Esophagus muscularis mucosa (tissue), 4 donors: ENCODE measurements at regions of chr7 and their contacts with region 1.

Region 1: GRCh38 chr7:94436018-94436604 is 41.4 kb downstream of the COL1A2 start:
- DNase-seq: no peak
- H3K4me3 ChIP-seq: no peak overlapping the region
- H3K27ac ChIP-seq: no peak overlapping the region
- H3K4me1 ChIP-seq: peaks cover 0 to 8% (median 3%) of the 10 kb centered on the region in 4 donors
- H3K27me3 ChIP-seq: no peaks in the 10 kb centered on the region
- CTCF ChIP-seq: peak; percentile 73 to 83 (median 73)
- EP300 ChIP-seq: no peak
- POLR2A ChIP-seq: no peak

Region 2: GRCh38 chr7:94289071-94289470 is 147.0 kb before region 1 on chr7:
- intact Hi-C with region 1: loop called (anchors 1 kb)
- DNase-seq: no peak
- H3K4me3 ChIP-seq: no peak overlapping the region
- H3K27ac ChIP-seq: no peak overlapping the region
- H3K4me1 ChIP-seq: no peaks in the 10 kb centered on the region
- H3K27me3 ChIP-seq: no peaks in the 10 kb centered on the region
- CTCF ChIP-seq: peak; percentile 94 to 96 (median 94)
- EP300 ChIP-seq: no peak
- POLR2A ChIP-seq: no peak

Region 3: DNA sequence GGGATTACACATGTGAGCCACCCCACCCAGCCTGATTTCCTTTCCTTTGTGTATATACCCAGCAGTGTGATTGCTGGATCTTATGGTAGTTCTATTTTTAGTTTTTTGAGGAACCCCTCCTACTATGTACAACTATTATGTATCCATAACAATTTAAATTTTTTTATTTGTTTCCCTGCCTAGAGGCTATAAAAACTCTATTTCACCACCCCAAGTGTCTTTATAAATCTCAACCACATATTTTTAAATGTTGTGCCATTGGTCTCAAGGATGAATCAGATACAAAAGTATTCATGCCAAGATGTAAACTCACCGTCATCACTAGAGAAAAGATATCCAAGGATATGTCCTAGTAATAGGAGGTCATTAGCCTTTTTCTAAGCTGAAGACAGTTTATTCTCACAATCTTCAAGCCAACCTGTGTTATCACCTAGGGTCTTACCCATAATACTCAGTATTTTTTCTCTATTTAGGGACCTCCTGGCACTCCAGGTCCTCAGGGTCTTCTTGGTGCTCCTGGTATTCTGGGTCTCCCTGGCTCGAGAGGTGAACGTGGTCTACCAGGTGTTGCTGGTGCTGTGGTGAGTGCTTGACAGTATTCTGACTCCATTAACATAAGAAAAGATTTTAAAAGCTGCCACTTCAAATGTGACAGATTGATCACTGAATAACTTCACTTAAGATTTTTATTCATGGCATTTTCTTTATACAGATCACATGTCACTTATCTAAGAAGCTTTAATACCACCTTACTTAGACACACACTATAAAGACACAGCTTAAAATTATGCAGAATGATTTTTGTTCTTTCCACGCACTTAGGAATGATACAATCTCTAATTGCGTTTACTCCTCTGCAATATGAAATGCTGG is 12.0 kb before region 1 on chr7:
- intact Hi-C with region 1: no loop called
- DNase-seq: no peak
- H3K4me3 ChIP-seq: no peak overlapping the region
- H3K27ac ChIP-seq: peak overlapping the region; percentile 58 to 80 (median 76)
- H3K4me1 ChIP-seq: peaks cover 0 to 35% (median 20%) of the 10 kb centered on the region in 4 donors
- H3K27me3 ChIP-seq: no peaks in the 10 kb centered on the region
- CTCF ChIP-seq: no peak
- EP300 ChIP-seq: no peak
- POLR2A ChIP-seq: no peak